Activated CD4-positive, alpha-beta T cell treated with anti-CD3 and anti-CD28 coated beads, Interleukin-2, amount 10 ng/mL, durations not matched to agents 24 days and 14 days (primary cell): ENCODE measurements at regions of chr5 and their contacts with region 1.

Region 1: GRCh38 chr5:111254613-111255012 is 30.4 kb downstream of the CAMK4 start:
- DNase-seq: peak; percentile 90
- H3K4me3 Mint-ChIP-seq: peak overlapping the region; percentile 39
- H3K27ac Mint-ChIP-seq: peak overlapping the region; percentile 91
- H3K4me1 Mint-ChIP-seq: peaks cover 61% of the 10 kb centered on the region
- H3K27me3 Mint-ChIP-seq: no peaks in the 10 kb centered on the region

Region 2: DNA sequence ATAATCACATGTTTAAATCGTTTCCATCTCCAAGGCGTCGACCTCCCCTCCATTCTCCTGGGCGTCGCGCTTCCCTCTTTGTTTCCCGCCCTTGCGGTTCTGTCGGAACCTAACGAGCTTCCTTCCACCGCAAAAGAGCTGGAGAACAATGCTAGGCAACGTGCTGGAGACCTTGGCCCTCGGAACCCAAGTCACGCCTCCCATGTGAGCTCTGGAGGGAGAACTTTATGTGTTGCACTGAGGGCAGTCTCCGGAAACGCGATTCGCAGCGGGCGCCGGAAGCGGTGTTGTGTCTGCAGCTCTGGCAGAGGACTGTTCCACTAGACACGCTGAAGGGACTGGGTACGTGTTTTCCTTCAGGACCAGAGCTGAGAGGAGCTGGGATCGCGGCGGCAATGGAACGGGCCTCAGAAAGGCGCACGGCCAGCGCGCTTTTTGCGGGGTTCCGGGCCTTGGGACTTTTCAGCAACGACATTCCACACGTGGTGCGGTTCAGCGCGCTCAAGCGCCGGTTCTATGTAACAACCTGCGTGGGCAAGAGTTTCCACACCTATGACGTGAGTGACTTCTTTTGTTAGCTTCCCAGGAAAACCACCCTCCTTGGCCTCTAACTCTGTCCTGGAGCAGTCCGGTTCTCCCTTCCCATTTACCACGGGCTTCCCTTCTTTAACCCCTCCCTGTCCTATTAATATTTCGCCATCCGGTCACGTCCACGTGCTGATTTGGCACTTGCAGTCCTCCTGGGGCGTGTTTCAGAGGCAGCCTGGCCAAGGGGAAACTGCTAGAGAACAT is 162.4 kb before region 1 on chr5 and contains the start of gene WDR36:
- intact Hi-C with region 1: loop called (anchors 1 kb)
- DNase-seq: peak; percentile 97
- H3K4me3 Mint-ChIP-seq: peak within 1 kb of the TSS; percentile 96
- H3K27ac Mint-ChIP-seq: peak within 1 kb of the TSS; percentile 98
- H3K4me1 Mint-ChIP-seq: peaks cover 22% of the 10 kb centered on the region
- H3K27me3 Mint-ChIP-seq: peaks cover 2% of the 10 kb centered on the region
- total RNA-seq, gene WDR36: 90.1 and 97.7 TPM in 2 replicates

Region 3: DNA sequence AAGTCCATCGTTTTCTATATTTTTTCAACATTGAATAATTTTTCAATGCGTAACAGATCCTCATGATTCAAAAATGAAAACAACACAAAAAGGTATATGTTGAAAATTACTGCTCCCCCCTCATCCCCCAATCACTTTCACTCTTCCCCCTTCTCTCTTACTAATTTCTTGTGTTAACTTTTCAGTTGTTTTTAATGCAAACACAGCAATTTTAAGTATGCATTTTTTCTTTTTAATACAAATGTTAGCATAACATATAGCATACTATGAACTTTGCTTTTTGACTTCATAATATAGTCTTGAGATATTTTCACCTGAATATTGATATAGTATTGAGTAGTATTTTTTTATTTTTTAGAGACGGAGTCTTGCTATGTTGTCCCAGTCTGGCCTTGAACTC is 71.5 kb before region 1 on chr5:
- intact Hi-C with region 1: no loop called
- DNase-seq: no peak
- H3K4me3 Mint-ChIP-seq: no peak overlapping the region
- H3K27ac Mint-ChIP-seq: no peak overlapping the region
- H3K4me1 Mint-ChIP-seq: no peaks in the 10 kb centered on the region
- H3K27me3 Mint-ChIP-seq: peaks cover 6% of the 10 kb centered on the region

Region 4: DNA sequence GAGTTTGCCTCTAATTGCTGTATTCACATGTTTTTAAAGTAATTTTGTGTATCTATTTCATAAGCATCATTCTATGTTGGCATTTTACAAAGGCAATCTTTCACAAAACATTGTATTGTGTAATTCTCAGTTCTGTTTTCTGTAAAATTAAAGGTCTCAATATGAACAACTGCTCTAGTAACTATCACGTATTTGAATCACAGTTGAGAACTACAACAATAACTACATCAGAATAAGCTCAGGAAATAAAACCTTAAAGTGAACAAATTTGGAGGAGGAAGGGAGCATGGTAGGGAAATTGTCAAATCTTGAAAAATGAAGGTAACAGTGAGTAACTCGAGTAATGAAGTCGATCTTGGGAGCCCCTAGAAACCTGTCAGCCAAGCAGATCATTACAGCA is 52.9 kb before region 1 on chr5:
- intact Hi-C with region 1: no loop called
- DNase-seq: no peak
- H3K4me3 Mint-ChIP-seq: no peak overlapping the region
- H3K27ac Mint-ChIP-seq: no peak overlapping the region
- H3K4me1 Mint-ChIP-seq: peaks cover 4% of the 10 kb centered on the region
- H3K27me3 Mint-ChIP-seq: peaks cover 15% of the 10 kb centered on the region

Region 5: GRCh38 chr5:111223889-111224563 is 30.6 kb before region 1 on chr5 and contains the start of gene CAMK4:
- intact Hi-C with region 1: loop called (anchors 1 kb)
- DNase-seq: peak; percentile 94
- H3K4me3 Mint-ChIP-seq: peak within 1 kb of the TSS; percentile 97
- H3K27ac Mint-ChIP-seq: peak within 1 kb of the TSS; percentile 95
- H3K4me1 Mint-ChIP-seq: peaks cover 35% of the 10 kb centered on the region
- H3K27me3 Mint-ChIP-seq: peaks cover 2% of the 10 kb centered on the region
- total RNA-seq, gene CAMK4: 47.7 and 49.5 TPM in 2 replicates

Region 6: DNA sequence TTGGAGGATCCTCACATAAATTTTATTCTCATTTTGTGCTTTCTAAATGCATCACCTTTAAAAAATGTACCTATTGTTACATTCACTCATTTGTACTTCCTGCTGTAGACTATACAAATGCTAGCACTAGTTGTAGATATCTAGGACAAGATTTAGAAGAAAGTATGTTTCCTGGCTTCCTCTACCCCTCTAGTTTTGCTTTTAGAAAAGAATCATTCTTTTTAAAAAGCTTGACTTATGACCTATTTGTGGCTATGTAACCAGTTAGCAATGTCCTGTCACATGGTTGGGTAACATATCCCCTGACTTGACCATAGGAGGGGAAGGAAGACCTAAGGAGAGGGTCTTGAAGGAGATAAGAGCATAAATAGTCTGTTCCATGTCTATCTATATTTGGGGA is 17.1 kb before region 1 on chr5:
- intact Hi-C with region 1: loop called (anchors 1 kb)
- DNase-seq: no peak
- H3K4me3 Mint-ChIP-seq: peak overlapping the region; percentile 73
- H3K27ac Mint-ChIP-seq: peak overlapping the region; percentile 92
- H3K4me1 Mint-ChIP-seq: peaks cover 68% of the 10 kb centered on the region
- H3K27me3 Mint-ChIP-seq: no peaks in the 10 kb centered on the region

Region 7: DNA sequence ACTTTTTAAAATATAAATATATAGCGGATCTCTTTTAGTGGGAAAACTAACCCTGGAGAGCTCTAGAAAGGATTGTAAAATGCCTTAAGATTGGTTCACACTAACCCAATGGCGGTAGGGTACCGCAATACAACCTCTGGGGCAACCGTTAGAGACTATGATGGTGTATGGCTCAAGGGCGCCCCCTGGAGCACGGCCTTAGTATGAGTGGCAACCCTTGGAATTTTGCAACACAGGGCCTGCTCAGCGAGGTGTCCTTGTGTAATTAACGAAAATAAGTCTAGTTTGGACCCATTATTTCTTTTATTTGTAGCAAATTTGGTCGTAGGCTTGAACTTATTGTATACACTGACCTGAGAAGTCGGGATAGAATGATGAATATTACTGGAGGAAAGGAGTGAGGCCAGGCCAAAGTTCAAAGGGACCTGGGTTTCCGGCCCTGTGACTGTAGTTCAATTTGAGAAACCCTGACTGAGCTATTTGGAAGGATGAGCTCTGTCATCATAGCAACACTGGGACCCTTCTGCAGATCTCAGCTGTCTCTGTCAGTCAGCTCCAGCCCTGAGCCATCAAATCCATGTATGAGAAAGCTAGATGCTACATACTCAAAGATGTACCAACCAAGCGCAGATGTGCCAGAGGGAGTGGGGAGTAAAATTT is 24.4 kb after region 1 on chr5:
- intact Hi-C with region 1: loop called (anchors 2 kb)
- DNase-seq: peak; percentile 95
- H3K4me3 Mint-ChIP-seq: no peak overlapping the region
- H3K27ac Mint-ChIP-seq: no peak overlapping the region
- H3K4me1 Mint-ChIP-seq: peaks cover 24% of the 10 kb centered on the region
- H3K27me3 Mint-ChIP-seq: no peaks in the 10 kb centered on the region

Region 8: DNA sequence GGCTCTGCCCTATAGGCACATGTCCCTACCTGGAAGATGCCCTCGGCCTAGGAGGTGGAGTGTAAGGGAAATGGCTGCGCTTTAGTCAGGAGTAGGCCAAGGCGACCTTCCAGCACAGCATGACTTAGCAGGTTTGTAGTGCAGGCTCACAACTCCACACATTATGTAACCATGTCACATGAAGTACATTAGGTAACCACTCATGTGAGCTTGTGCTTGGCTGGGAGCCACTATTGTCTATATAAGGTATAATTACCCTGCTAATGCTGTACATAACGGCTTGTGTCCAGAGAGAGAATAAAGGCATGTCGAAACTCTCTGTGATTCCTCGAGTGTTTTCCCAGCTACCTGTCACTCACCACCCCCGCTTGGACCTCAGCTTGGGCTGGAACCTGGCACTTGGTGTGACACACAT is 44.5 kb after region 1 on chr5:
- intact Hi-C with region 1: no loop called
- DNase-seq: no peak
- H3K4me3 Mint-ChIP-seq: no peak overlapping the region
- H3K27ac Mint-ChIP-seq: peak overlapping the region; percentile 34
- H3K4me1 Mint-ChIP-seq: peaks cover 6% of the 10 kb centered on the region
- H3K27me3 Mint-ChIP-seq: no peaks in the 10 kb centered on the region

Region 9: GRCh38 chr5:111954516-111955395 is 700.1 kb after region 1 on chr5:
- intact Hi-C with region 1: no loop called
- DNase-seq: no peak
- H3K4me3 Mint-ChIP-seq: no peak overlapping the region
- H3K27ac Mint-ChIP-seq: no peak overlapping the region
- H3K4me1 Mint-ChIP-seq: no peaks in the 10 kb centered on the region
- H3K27me3 Mint-ChIP-seq: no peaks in the 10 kb centered on the region